GM12878 (cell line): ENCODE measurements at regions of chr4 and their contacts with region 1.

Region 1: GRCh38 chr4:173019711-173020110 is 148.9 kb upstream of the GALNT7 start:
- DNase-seq: no peak
- ATAC-seq: no peak
- H3K4me3 ChIP-seq: no peak overlapping the region
- H3K27ac ChIP-seq: no peak overlapping the region
- H3K4me1 ChIP-seq: no peaks in the 10 kb centered on the region
- H3K27me3 ChIP-seq: no peaks in the 10 kb centered on the region; a peak in 1 of 4 replicates
- CTCF ChIP-seq: no peak
- EP300 ChIP-seq: no peak
- POLR2A ChIP-seq: no peak
- RAD21 ChIP-seq: no peak

Region 2: GRCh38 chr4:172776203-172776861 is 243.4 kb before region 1 on chr4:
- CTCF ChIA-PET with region 1: no interaction called
- POLR2A ChIA-PET with region 1: no interaction called
- RAD21 ChIA-PET with region 1: no interaction called
- SMC1A ChIA-PET with region 1: no interaction called
- in situ Hi-C with region 1: no loop called
- intact Hi-C with region 1: no loop called
- DNase-seq: no peak
- ATAC-seq: no peak
- H3K4me3 ChIP-seq: no peak overlapping the region
- H3K27ac ChIP-seq: no peak overlapping the region
- H3K4me1 ChIP-seq: no peaks in the 10 kb centered on the region
- H3K27me3 ChIP-seq: no peaks in the 10 kb centered on the region
- CTCF ChIP-seq: no peak
- EP300 ChIP-seq: no peak
- POLR2A ChIP-seq: no peak
- RAD21 ChIP-seq: no peak

Region 3: GRCh38 chr4:172962564-172963353 is 57.0 kb before region 1 on chr4:
- CTCF ChIA-PET with region 1: no interaction called
- POLR2A ChIA-PET with region 1: no interaction called
- RAD21 ChIA-PET with region 1: no interaction called
- SMC1A ChIA-PET with region 1: no interaction called
- in situ Hi-C with region 1: no loop called
- intact Hi-C with region 1: no loop called
- DNase-seq: no peak
- ATAC-seq: no peak
- H3K4me3 ChIP-seq: no peak overlapping the region
- H3K27ac ChIP-seq: no peak overlapping the region
- H3K4me1 ChIP-seq: no peaks in the 10 kb centered on the region
- H3K27me3 ChIP-seq: 0 out of 4 replicates have a peak, but pooled peaks cover 0 to 1% of the 10 kb centered on the region in 2 experiments
- CTCF ChIP-seq: no peak
- EP300 ChIP-seq: no peak
- POLR2A ChIP-seq: no peak
- RAD21 ChIP-seq: no peak

Region 4: DNA sequence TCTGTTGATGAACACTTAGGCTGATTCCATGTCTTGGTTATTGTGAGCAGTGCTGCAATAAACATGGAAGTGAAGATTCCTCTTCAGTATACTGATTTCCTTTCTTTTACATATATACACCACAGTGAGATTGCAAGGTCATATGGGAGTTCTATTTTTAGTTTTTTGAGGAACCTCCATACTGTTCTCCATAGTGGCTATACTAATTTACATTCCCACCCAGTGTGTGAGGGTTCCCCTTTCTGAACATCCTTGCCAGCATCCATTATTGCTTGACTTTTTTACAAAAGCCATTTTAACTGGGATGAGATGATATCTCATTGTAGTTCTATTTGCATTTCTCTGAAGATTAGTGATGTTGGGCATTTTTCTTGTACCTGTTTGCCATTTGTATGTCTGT is 68.4 kb after region 1 on chr4:
- CTCF ChIA-PET with region 1: no interaction called
- POLR2A ChIA-PET with region 1: no interaction called
- RAD21 ChIA-PET with region 1: no interaction called
- SMC1A ChIA-PET with region 1: no interaction called
- in situ Hi-C with region 1: no loop called
- intact Hi-C with region 1: no loop called
- DNase-seq: no peak
- ATAC-seq: no peak
- H3K4me3 ChIP-seq: no peak overlapping the region
- H3K27ac ChIP-seq: no peak overlapping the region
- H3K4me1 ChIP-seq: no peaks in the 10 kb centered on the region
- H3K27me3 ChIP-seq: no peaks in the 10 kb centered on the region
- CTCF ChIP-seq: no peak
- EP300 ChIP-seq: no peak
- POLR2A ChIP-seq: no peak
- RAD21 ChIP-seq: no peak

Region 5: GRCh38 chr4:173500841-173501591 is 481.3 kb after region 1 on chr4:
- CTCF ChIA-PET with region 1: interaction called, 3 read pairs
- POLR2A ChIA-PET with region 1: no interaction called
- RAD21 ChIA-PET with region 1: no interaction called
- SMC1A ChIA-PET with region 1: no interaction called
- in situ Hi-C with region 1: loop called (anchors 5 kb)
- intact Hi-C with region 1: no loop called
- DNase-seq: no peak
- ATAC-seq: no peak
- H3K4me3 ChIP-seq: 0 out of 2 replicates have a peak overlapping the region, but pooled peaks have one; percentile 22
- H3K27ac ChIP-seq: no peak overlapping the region
- H3K4me1 ChIP-seq: peaks cover 12% of the 10 kb centered on the region
- H3K27me3 ChIP-seq: no peaks in the 10 kb centered on the region; a peak in 1 of 4 replicates
- CTCF ChIP-seq: no peak
- EP300 ChIP-seq: no peak
- POLR2A ChIP-seq: no peak
- RAD21 ChIP-seq: no peak